ENCODE measurements at regions of chr17 and their contacts with region 1.

Region 1: GRCh38 chr17:35764123-35764991 is 3.7 kb downstream of the C17orf50 start:
- DNase-seq: peak; percentile 92 to 94
- H3K4me3 ChIP-seq: peak overlapping the region in 1 of 3 donors; percentile 25
- H3K27ac ChIP-seq: peak overlapping the region in 2 of 3 donors; percentile 49 to 56
- H3K4me1 ChIP-seq: peaks cover 7 to 9% of the 10 kb centered on the region in 2 donors
- H3K27me3 ChIP-seq: no peaks in the 10 kb centered on the region
- CTCF ChIP-seq: peak; percentile 66 to 100 (median 95)
- POLR2A ChIP-seq: peak in 1 of 2 donors; percentile 37

Region 2: DNA sequence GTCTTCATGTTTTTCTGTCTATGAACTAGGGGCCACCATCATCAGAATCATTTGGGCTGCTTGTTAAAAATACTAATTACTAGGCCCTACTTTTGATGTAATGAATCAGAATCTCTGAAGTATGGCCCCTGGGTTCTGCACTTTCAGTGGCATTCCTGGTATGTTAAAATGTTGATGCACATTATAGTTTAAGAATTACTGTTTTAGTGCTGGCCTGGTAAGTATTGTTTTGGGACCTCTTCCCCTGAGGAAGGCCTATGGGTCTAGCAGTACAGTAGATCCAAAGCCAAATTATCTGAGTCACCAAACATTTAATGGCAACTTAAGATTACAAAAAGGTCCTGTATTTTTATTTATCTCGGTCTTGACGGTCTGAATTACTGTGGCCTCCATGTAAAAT is 118.4 kb before region 1 on chr17:
- intact Hi-C with region 1: no loop called
- DNase-seq: no peak
- H3K4me3 ChIP-seq: no peak overlapping the region
- H3K27ac ChIP-seq: no peak overlapping the region
- H3K4me1 ChIP-seq: no peaks in the 10 kb centered on the region
- H3K27me3 ChIP-seq: no peaks in the 10 kb centered on the region
- CTCF ChIP-seq: no peak
- POLR2A ChIP-seq: no peak

Region 3: GRCh38 chr17:35804658-35805192 is 40.4 kb after region 1 on chr17:
- intact Hi-C with region 1: loop called (anchors 2 kb)
- DNase-seq: peak; percentile 37 to 42
- H3K4me3 ChIP-seq: no peak overlapping the region
- H3K27ac ChIP-seq: peak overlapping the region in 1 of 3 donors; percentile 24
- H3K4me1 ChIP-seq: peaks cover 11 to 27% of the 10 kb centered on the region in 2 donors
- H3K27me3 ChIP-seq: no peaks in the 10 kb centered on the region
- CTCF ChIP-seq: peak; percentile 78 to 100 (median 94)
- POLR2A ChIP-seq: no peak

Region 4: DNA sequence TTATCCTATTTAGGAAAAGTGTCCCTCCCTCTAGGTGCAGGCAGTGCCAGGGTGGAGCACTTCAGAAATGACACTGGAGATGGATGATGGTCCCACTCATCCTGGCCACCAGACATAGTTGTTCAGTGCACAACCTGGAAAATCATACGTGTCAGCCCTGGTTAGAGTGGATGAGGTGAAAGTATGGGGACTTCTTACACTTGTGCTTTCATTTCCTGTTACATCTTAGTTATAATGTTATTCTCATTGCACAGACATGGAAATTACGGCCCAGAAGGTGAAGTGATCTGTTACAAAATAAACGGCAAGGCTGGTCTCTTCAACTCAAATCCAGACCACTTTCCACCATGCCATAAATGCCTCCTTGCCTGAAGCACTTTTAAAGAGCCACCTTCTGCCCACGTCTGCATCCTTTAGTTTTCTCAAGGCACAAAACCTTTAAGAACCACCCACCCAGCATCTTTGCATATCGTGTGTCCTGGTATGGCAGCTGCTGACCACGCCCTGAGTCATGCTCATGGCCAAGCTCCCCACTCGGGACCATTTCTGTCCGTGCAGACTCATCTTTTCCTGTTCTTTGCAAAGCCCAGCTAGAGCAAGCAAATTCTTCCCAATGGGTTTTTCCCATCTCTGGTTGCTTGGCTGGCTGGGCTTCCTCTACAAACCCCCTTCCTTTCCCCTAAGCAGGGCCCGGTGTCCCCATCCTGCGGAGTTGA is 389.7 kb after region 1 on chr17:
- intact Hi-C with region 1: no loop called
- DNase-seq: no peak
- H3K4me3 ChIP-seq: no peak overlapping the region
- H3K27ac ChIP-seq: no peak overlapping the region
- H3K4me1 ChIP-seq: no peaks in the 10 kb centered on the region
- H3K27me3 ChIP-seq: peaks cover 6% of the 10 kb centered on the region
- CTCF ChIP-seq: no peak
- POLR2A ChIP-seq: no peak

Measured in thyroid gland (tissue), 4 donors.